Activated CD4-positive, alpha-beta T cell treated with anti-CD3 and anti-CD28 coated beads, Interleukin-2, amount 10 ng/mL, durations not matched to agents 24 days and 14 days (primary cell): ENCODE measurements at regions of chr5 and their contacts with region 1.

Region 1: GRCh38 chr5:35926389-35927051 is 11.9 kb downstream of the CAPSL start:
- DNase-seq: peak; percentile 91
- H3K4me3 Mint-ChIP-seq: peak overlapping the region; percentile 50
- H3K27ac Mint-ChIP-seq: no peak overlapping the region
- H3K4me1 Mint-ChIP-seq: peaks cover 26% of the 10 kb centered on the region
- H3K27me3 Mint-ChIP-seq: peaks cover 7% of the 10 kb centered on the region

Region 2: GRCh38 chr5:34881246-34881645 is 1045.3 kb before region 1 on chr5:
- intact Hi-C with region 1: no loop called
- DNase-seq: no peak
- H3K4me3 Mint-ChIP-seq: no peak overlapping the region
- H3K27ac Mint-ChIP-seq: no peak overlapping the region
- H3K4me1 Mint-ChIP-seq: no peaks in the 10 kb centered on the region
- H3K27me3 Mint-ChIP-seq: peaks cover 12% of the 10 kb centered on the region

Region 3: GRCh38 chr5:35487233-35488025 is 439.1 kb before region 1 on chr5:
- intact Hi-C with region 1: loop called (anchors 5 kb)
- DNase-seq: no peak
- H3K4me3 Mint-ChIP-seq: no peak overlapping the region
- H3K27ac Mint-ChIP-seq: no peak overlapping the region
- H3K4me1 Mint-ChIP-seq: no peaks in the 10 kb centered on the region
- H3K27me3 Mint-ChIP-seq: peaks cover 22% of the 10 kb centered on the region

Region 4: GRCh38 chr5:35651002-35651756 is 275.3 kb before region 1 on chr5:
- intact Hi-C with region 1: loop called (anchors 1 kb)
- DNase-seq: peak; percentile 90
- H3K4me3 Mint-ChIP-seq: no peak overlapping the region
- H3K27ac Mint-ChIP-seq: no peak overlapping the region
- H3K4me1 Mint-ChIP-seq: peaks cover 2% of the 10 kb centered on the region
- H3K27me3 Mint-ChIP-seq: no peaks in the 10 kb centered on the region

Region 5: GRCh38 chr5:35736280-35736679 is 190.2 kb before region 1 on chr5:
- intact Hi-C with region 1: loop called (anchors 5 kb)
- DNase-seq: peak; percentile 54
- H3K4me3 Mint-ChIP-seq: no peak overlapping the region
- H3K27ac Mint-ChIP-seq: peak overlapping the region; percentile 41
- H3K4me1 Mint-ChIP-seq: peaks cover 20% of the 10 kb centered on the region
- H3K27me3 Mint-ChIP-seq: no peaks in the 10 kb centered on the region

Region 6: DNA sequence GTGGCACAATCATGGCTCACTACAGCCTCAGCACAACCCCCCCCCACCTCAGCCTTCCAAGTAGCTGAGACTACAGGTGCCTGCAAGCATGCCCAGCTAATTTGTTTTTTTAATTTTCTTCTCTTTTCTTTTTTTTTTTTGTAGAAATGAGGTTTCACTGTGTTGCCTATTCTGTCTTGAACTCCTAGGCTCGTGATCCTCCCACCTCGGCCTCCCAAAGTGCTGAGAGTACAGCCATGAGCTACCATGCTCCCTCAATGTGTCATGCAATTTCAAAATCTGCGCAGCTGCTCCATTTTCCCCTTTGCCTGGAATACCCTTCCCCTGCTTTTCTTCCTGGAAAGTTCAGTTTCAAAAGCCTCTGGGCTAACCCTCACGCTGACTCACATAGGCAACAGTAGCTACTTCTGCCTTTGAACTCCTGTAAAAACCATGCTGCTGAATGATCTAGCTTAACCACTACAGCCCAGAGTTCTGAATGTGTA is 140.9 kb before region 1 on chr5:
- intact Hi-C with region 1: loop called (anchors 2 kb)
- DNase-seq: peak; percentile 81
- H3K4me3 Mint-ChIP-seq: peak overlapping the region; percentile 46
- H3K27ac Mint-ChIP-seq: peak overlapping the region; percentile 84
- H3K4me1 Mint-ChIP-seq: peaks cover 66% of the 10 kb centered on the region
- H3K27me3 Mint-ChIP-seq: no peaks in the 10 kb centered on the region

Region 7: DNA sequence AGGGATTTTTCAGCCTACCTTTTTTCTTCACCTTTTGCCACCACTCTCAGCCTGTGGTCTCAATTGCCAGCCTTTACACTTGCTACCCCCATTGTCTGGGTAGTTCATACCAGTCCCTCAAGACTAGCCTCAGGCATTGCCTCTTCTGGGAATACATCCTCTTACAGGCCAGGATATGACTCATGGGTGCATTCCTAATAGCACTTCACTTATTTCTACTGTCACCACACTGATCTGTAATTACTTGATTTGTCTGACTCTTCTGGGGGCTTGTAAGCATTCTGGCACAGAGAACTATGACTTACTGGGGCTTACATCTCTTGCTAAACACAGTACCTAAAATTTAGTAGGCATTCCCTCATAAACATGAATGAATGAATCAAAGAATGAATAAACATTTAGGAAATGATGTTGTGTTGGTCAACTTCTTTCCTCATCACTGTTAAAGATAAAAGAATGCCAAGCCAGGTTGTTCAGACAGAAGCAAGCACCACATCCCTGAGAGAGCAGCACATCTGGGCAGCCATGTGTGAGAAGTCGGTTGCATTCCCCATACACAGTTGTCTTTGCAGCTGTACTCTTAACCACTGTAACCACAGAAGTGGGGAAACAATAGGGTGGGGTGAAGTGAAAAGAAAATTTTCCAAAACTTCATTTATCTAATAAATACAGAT is 42.3 kb before region 1 on chr5:
- intact Hi-C with region 1: loop called (anchors 2 kb)
- DNase-seq: no peak
- H3K4me3 Mint-ChIP-seq: peak overlapping the region; percentile 63
- H3K27ac Mint-ChIP-seq: peak overlapping the region; percentile 86
- H3K4me1 Mint-ChIP-seq: peaks cover 35% of the 10 kb centered on the region
- H3K27me3 Mint-ChIP-seq: no peaks in the 10 kb centered on the region

Region 8: GRCh38 chr5:35938568-35939227 is 12.2 kb after region 1 on chr5 and contains the start of gene CAPSL:
- intact Hi-C with region 1: no loop called
- DNase-seq: peak; percentile 53
- H3K4me3 Mint-ChIP-seq: no peak within 1 kb of the TSS
- H3K27ac Mint-ChIP-seq: no peak within 1 kb of the TSS
- H3K4me1 Mint-ChIP-seq: no peaks in the 10 kb centered on the region
- H3K27me3 Mint-ChIP-seq: peaks cover 17% of the 10 kb centered on the region
- total RNA-seq, gene CAPSL: not detected in 2 replicates